Ovary (tissue), 10 donors: ENCODE measurements at regions of chr1 and their contacts with region 1.

Region 1: GRCh38 chr1:31663622-31664452 is 19.2 kb upstream of the PEF1 start:
- DNase-seq: peak; percentile 58 to 82 (median 78)
- H3K4me3 ChIP-seq: no peak overlapping the region
- H3K27ac ChIP-seq: no peak overlapping the region
- H3K4me1 ChIP-seq: no peaks in the 10 kb centered on the region
- H3K27me3 ChIP-seq: no peaks in the 10 kb centered on the region
- CTCF ChIP-seq: peak; percentile 83 to 96 (median 93)
- EP300 ChIP-seq: no peak
- POLR2A ChIP-seq: no peak

Region 2: DNA sequence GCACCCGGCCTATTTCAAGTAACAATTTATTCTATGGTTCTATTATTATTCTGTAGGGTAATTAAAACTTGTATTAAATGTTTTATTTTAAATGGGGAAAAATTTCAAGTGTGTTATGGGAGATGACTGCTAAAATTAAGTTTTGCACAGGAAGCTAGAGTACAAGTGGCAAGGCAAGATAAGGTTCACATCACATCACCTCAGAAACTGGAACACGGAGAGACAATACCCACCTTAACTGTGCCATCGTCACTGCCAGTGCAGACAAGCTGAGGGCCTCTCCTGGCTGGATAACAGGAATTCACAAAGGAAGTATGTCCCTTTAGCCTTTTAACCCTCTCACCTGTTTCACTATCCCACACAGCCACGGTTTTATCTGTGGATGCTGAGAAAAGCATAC is 374.8 kb before region 1 on chr1:
- intact Hi-C with region 1: no loop called
- DNase-seq: no peak
- H3K4me3 ChIP-seq: no peak overlapping the region
- H3K27ac ChIP-seq: no peak overlapping the region
- H3K4me1 ChIP-seq: no peaks in the 10 kb centered on the region
- H3K27me3 ChIP-seq: no peaks in the 10 kb centered on the region
- CTCF ChIP-seq: no peak
- EP300 ChIP-seq: no peak
- POLR2A ChIP-seq: no peak

Region 3: DNA sequence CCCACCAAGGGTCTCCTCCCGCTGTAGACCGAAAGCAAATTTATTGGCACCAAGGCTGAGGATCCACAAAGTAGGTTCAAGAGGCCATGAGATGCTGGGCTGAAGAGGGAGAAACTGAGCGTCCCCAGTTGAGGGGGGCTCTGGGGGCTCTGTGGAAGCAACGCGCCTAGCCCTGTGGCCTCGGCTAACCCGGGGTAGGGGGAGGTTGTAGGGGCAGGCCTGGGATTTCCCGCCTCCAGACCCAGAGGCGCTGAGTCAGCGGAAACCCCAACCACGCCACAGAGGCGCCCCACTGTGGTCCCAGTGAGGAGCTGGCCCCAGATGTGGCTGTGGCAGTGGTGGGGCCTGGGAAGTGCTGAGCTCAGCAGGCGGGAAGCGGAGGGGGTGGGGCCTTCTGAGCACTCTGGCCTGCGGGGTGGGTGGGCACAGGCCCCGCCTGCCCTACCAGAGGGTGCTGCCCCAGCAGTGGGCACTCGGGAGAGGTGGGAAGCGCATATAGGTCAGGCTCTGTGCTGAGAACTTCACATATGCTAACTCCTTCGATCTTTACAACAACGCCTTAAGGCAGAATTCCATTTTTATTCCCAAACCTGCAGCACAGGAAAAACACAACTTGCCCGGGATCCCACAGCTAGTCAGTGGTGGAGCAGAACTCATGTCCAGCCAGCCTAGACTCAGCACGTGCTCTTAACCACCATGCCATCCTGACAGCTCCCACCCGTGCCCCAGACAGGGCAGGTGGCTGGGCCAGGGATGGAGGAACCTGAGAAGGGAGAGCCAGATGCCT is 41.4 kb after region 1 on chr1:
- intact Hi-C with region 1: loop called in 3 of 4 experiments (anchors 2 to 5 kb)
- DNase-seq: peak; percentile 81 to 85 (median 84)
- H3K4me3 ChIP-seq: no peak overlapping the region
- H3K27ac ChIP-seq: peak overlapping the region; percentile 34 to 89
- H3K4me1 ChIP-seq: peaks cover 29% of the 10 kb centered on the region
- H3K27me3 ChIP-seq: no peaks in the 10 kb centered on the region
- CTCF ChIP-seq: peak in 2 of 3 donors; percentile 12 to 48
- EP300 ChIP-seq: no peak
- POLR2A ChIP-seq: no peak

Region 4: DNA sequence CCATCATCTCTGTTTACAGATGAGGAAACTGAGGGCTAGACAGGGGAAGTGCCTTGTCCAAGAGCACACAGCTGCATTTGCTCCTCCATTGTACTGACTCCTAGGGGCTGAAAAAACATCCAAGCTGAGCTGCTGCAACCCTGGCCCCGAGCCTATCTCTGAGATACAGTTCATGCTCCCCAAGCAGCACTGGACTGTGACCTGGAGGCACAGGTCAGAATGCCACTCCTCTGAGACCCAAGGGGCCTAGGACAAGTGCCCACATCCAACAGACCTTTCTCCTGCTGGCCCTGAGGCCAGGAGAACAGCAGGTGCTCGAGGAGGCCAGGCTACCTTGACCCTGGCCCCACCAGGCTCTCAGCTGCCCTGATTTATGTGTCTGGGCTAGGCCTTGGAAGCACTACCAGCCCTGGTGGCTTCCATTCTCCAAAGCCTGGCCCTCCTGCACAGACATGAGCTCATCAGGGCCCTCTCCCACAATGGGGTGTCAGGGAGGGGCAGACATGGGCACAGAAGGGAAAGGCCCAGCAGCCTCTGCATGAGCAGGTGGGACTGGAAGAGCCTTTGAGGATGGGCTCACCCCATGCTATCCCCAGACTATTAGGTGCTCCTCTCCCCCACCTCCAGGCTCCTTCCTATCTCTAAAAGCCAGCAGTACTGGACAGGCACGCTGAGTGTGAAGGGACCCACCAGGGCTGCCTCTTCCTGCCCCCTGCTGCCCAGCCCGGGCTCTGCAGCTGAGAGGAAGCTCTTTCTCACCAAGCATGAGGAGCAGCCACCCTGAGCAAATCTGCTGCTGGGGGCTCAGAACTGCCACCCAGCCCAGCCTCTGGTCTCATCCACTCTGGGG is 81.5 kb after region 1 on chr1:
- intact Hi-C with region 1: loop called in 3 of 4 experiments (anchors 5 to 10 kb)
- DNase-seq: peak; percentile 58 to 85 (median 78)
- H3K4me3 ChIP-seq: no peak overlapping the region
- H3K27ac ChIP-seq: no peak overlapping the region
- H3K4me1 ChIP-seq: no peaks in the 10 kb centered on the region
- H3K27me3 ChIP-seq: no peaks in the 10 kb centered on the region
- CTCF ChIP-seq: peak; percentile 48 to 81 (median 69)
- EP300 ChIP-seq: no peak
- POLR2A ChIP-seq: no peak

Region 5: GRCh38 chr1:31866450-31867032 is 202.7 kb after region 1 on chr1:
- intact Hi-C with region 1: no loop called
- DNase-seq: no peak
- H3K4me3 ChIP-seq: no peak overlapping the region
- H3K27ac ChIP-seq: no peak overlapping the region
- H3K4me1 ChIP-seq: no peaks in the 10 kb centered on the region
- H3K27me3 ChIP-seq: no peaks in the 10 kb centered on the region
- CTCF ChIP-seq: no peak
- EP300 ChIP-seq: no peak
- POLR2A ChIP-seq: no peak

Region 6: GRCh38 chr1:32063261-32063681 is 399.4 kb after region 1 on chr1:
- intact Hi-C with region 1: loop called in 2 of 4 experiments (anchors 5 to 10 kb)
- DNase-seq: no peak
- H3K4me3 ChIP-seq: no peak overlapping the region
- H3K27ac ChIP-seq: peak overlapping the region in 1 of 2 donors; percentile 39
- H3K4me1 ChIP-seq: peaks cover 12% of the 10 kb centered on the region
- H3K27me3 ChIP-seq: no peaks in the 10 kb centered on the region
- CTCF ChIP-seq: peak; percentile 29 to 79 (median 71)
- EP300 ChIP-seq: no peak
- POLR2A ChIP-seq: no peak